Caco-2 (cell line): ENCODE measurements at regions of chr14 and their contacts with region 1.

Region 1: DNA sequence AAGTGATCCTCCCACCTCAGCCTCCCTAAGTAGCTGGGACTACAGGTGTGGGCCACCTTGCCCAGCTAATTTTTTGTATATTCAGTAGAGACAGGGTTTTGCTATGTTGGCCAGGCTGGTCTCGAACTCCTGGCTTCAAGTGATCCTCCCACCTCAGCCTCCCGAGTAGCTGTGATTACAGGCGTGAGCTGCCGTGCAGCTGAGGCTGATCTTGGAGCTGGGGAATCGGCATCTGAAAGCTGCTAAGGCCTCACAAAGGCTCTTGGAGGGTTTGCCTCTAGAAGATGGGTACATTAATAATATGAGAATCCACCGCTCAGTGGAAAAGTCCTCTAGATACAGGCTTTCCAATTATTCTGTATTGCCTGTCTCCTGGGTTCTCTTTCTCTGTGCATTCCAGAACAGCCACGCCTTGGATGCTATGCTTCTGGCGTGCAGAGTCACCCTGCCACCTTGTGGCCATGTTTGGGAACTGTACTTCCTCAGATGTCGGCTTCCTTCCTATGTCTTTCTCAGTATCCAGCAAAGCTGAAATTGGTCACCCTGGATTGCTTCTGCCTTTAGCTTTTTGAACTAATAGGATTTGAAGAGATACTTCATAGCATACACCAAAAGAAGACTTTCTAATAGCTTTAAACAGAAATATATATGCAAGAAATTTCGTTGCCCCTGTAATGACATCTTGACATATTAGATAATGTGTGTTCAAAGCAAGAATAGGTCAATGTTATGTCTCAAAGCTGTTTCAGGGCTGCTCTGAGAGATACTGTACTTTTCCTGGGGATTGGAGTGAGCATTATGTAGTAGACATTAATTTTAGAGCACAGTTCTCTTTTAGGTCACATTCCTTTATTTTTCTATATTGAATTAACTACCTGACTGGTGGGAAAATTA is 75.4 kb downstream of the SNAPC1 start:
- DNase-seq: peak; percentile 68 to 83
- H3K4me3 ChIP-seq: no peak overlapping the region
- H3K4me3 Mint-ChIP-seq: no peak overlapping the region
- H3K27ac Mint-ChIP-seq: no peak overlapping the region
- H3K4me1 ChIP-seq: no peaks in the 10 kb centered on the region
- H3K4me1 Mint-ChIP-seq: no peaks in the 10 kb centered on the region
- H3K27me3 ChIP-seq: no peaks in the 10 kb centered on the region
- H3K27me3 Mint-ChIP-seq: peaks cover 5% of the 10 kb centered on the region
- CTCF ChIP-seq: peak; percentile 83 to 90

Region 2: GRCh38 chr14:61269321-61270083 is 568.1 kb before region 1 on chr14:
- CTCF ChIA-PET with region 1: no interaction called
- POLR2A ChIA-PET with region 1: no interaction called
- intact Hi-C with region 1: loop called (anchors 1 kb)
- DNase-seq: peak; percentile 79 to 80
- H3K4me3 ChIP-seq: peak overlapping the region; percentile 40
- H3K4me3 Mint-ChIP-seq: peak overlapping the region; percentile 53
- H3K27ac Mint-ChIP-seq: no peak overlapping the region
- H3K4me1 ChIP-seq: no peaks in the 10 kb centered on the region
- H3K4me1 Mint-ChIP-seq: no peaks in the 10 kb centered on the region
- H3K27me3 ChIP-seq: no peaks in the 10 kb centered on the region
- H3K27me3 Mint-ChIP-seq: peaks cover 10% of the 10 kb centered on the region
- CTCF ChIP-seq: peak; percentile 75 to 79

Region 3: DNA sequence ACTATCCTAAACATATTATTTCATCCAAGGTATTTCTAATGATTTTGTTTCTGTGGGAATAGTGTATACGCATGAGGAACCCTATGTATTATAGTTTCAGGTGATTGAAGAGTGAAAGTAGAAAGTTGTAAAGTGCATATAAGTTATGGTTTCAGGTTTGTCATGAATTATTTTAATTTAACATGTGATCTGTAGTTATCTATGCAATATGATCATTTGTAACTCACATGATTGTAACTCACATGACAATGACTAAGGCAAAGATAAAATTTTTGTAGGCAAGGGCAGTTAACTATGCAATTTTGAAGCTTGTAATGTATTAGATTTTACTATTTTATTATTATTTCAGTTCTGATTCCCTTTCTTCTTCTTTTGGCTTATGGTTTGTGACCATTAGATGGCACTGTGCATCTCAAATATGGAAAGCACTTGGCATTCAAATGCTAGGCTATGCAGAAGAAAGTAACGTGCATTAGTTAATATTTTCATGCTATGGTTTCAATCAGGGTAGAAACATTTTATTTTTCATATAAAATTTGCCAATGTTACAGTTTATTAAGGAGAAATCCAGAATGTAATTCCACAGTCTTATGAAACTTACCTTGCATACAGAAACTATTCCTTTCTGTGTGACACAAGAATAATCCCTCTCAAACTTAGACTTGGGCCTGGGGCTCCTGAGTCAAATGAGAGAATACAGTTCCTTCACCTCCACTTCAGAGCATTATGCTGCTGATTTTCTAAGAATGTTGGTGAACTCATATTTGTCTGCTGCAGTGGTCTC is 540.7 kb before region 1 on chr14:
- CTCF ChIA-PET with region 1: interaction called, 3 read pairs
- POLR2A ChIA-PET with region 1: no interaction called
- intact Hi-C with region 1: loop called (anchors 1 kb)
- DNase-seq: peak in 1 of 2 experiments; percentile 43
- H3K4me3 ChIP-seq: no peak overlapping the region
- H3K4me3 Mint-ChIP-seq: no peak overlapping the region
- H3K27ac Mint-ChIP-seq: no peak overlapping the region
- H3K4me1 ChIP-seq: no peaks in the 10 kb centered on the region
- H3K4me1 Mint-ChIP-seq: no peaks in the 10 kb centered on the region
- H3K27me3 ChIP-seq: no peaks in the 10 kb centered on the region
- H3K27me3 Mint-ChIP-seq: no peaks in the 10 kb centered on the region
- CTCF ChIP-seq: peak; percentile 39 to 66

Region 4: DNA sequence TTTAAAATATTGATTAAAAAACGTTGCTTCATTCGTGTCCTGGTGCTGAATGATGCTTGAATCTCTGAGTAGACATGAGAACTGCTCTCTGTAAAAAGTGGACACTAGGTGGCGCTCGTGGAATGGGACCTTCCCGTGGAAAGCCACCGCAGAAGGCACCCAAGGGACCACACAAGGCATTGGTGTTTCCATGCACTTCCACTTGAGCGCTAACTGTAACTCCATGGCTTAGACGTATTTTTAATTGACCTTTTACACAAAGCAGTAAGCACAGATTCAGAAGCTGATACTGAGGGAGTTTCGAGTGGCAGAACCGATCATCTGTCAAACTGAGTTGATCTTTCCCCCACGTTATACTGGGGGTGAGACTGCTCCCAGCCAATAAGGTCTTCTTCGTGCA is 380.9 kb before region 1 on chr14:
- CTCF ChIA-PET with region 1: no interaction called
- POLR2A ChIA-PET with region 1: no interaction called
- intact Hi-C with region 1: loop called (anchors 1 kb)
- DNase-seq: peak; percentile 74 to 78
- H3K4me3 ChIP-seq: no peak overlapping the region
- H3K4me3 Mint-ChIP-seq: no peak overlapping the region
- H3K27ac Mint-ChIP-seq: no peak overlapping the region
- H3K4me1 ChIP-seq: no peaks in the 10 kb centered on the region
- H3K4me1 Mint-ChIP-seq: no peaks in the 10 kb centered on the region
- H3K27me3 ChIP-seq: no peaks in the 10 kb centered on the region
- H3K27me3 Mint-ChIP-seq: no peaks in the 10 kb centered on the region
- CTCF ChIP-seq: peak; percentile 84 to 87

Region 5: GRCh38 chr14:61461808-61462275 is 375.7 kb before region 1 on chr14:
- CTCF ChIA-PET with region 1: no interaction called
- POLR2A ChIA-PET with region 1: no interaction called
- intact Hi-C with region 1: loop called (anchors 1 kb)
- DNase-seq: peak in 1 of 2 experiments; percentile 63
- H3K4me3 ChIP-seq: no peak overlapping the region
- H3K4me3 Mint-ChIP-seq: no peak overlapping the region
- H3K27ac Mint-ChIP-seq: no peak overlapping the region
- H3K4me1 ChIP-seq: no peaks in the 10 kb centered on the region
- H3K4me1 Mint-ChIP-seq: no peaks in the 10 kb centered on the region
- H3K27me3 ChIP-seq: no peaks in the 10 kb centered on the region
- H3K27me3 Mint-ChIP-seq: no peaks in the 10 kb centered on the region
- CTCF ChIP-seq: peak; percentile 50 to 68

Region 6: DNA sequence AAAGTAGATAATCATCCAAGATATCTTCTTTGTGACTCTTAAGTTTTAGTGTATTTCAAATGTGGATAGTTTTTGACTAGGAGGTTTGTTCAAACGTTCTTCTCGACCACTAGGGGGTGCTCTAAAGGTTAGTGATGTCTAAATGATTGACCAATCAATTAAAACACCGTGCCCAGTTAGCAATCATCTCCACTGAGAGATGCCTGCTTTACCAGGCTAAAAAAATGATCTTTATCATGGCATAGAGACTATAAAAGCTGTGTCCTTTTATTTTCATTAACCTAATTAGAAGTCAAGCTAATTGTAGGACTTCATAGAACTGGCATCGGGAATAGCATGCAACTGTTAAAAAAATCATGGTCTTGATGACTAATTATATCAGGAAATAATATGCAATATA is 362.3 kb before region 1 on chr14:
- CTCF ChIA-PET with region 1: no interaction called
- POLR2A ChIA-PET with region 1: no interaction called
- intact Hi-C with region 1: loop called (anchors 5 kb)
- DNase-seq: peak in 1 of 2 experiments; percentile 60
- H3K4me3 ChIP-seq: no peak overlapping the region
- H3K4me3 Mint-ChIP-seq: no peak overlapping the region
- H3K27ac Mint-ChIP-seq: no peak overlapping the region
- H3K4me1 ChIP-seq: no peaks in the 10 kb centered on the region
- H3K4me1 Mint-ChIP-seq: peaks cover 6% of the 10 kb centered on the region
- H3K27me3 ChIP-seq: no peaks in the 10 kb centered on the region
- H3K27me3 Mint-ChIP-seq: no peaks in the 10 kb centered on the region
- CTCF ChIP-seq: peak; percentile 61 to 77

Region 7: DNA sequence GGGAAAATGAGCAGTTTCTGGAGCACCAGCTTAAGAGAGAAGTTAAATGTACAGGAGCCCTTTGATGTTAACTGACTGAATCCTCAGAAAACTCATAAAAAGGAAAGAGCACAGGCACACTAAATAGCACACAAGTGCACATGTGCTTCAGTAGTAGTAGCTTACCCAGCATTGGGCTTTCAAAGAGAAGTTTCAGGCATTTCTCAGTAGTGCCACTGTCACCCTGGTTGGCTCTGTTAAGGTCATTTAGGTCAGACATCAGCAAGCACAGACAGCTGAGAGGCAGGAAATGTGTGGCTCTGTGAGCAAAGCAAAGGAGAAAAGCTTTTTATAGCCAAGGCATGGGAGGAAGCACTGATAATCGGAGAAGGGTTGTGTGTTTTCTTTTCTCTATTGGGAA is 238.6 kb before region 1 on chr14:
- CTCF ChIA-PET with region 1: no interaction called
- POLR2A ChIA-PET with region 1: no interaction called
- intact Hi-C with region 1: no loop called
- DNase-seq: no peak
- H3K4me3 ChIP-seq: no peak overlapping the region
- H3K4me3 Mint-ChIP-seq: no peak overlapping the region
- H3K27ac Mint-ChIP-seq: no peak overlapping the region
- H3K4me1 ChIP-seq: peaks cover 40% of the 10 kb centered on the region
- H3K4me1 Mint-ChIP-seq: peaks cover 31% of the 10 kb centered on the region
- H3K27me3 ChIP-seq: no peaks in the 10 kb centered on the region
- H3K27me3 Mint-ChIP-seq: no peaks in the 10 kb centered on the region
- CTCF ChIP-seq: no peak

Region 8: GRCh38 chr14:61710853-61711817 is 126.4 kb before region 1 on chr14:
- CTCF ChIA-PET with region 1: no interaction called
- POLR2A ChIA-PET with region 1: no interaction called
- intact Hi-C with region 1: no loop called
- DNase-seq: no peak
- H3K4me3 ChIP-seq: no peak overlapping the region
- H3K4me3 Mint-ChIP-seq: no peak overlapping the region
- H3K27ac Mint-ChIP-seq: no peak overlapping the region
- H3K4me1 ChIP-seq: peaks cover 25% of the 10 kb centered on the region
- H3K4me1 Mint-ChIP-seq: peaks cover 30% of the 10 kb centered on the region
- H3K27me3 ChIP-seq: no peaks in the 10 kb centered on the region
- H3K27me3 Mint-ChIP-seq: no peaks in the 10 kb centered on the region
- CTCF ChIP-seq: no peak

Region 9: GRCh38 chr14:61761959-61762786 is 75.4 kb before region 1 on chr14 and contains the start of gene SNAPC1:
- CTCF ChIA-PET with region 1: interaction called, 6 read pairs
- POLR2A ChIA-PET with region 1: no interaction called
- intact Hi-C with region 1: loop called (anchors 5 kb)
- DNase-seq: peak; percentile 95
- H3K4me3 ChIP-seq: peak within 1 kb of the TSS; percentile 81
- H3K4me3 Mint-ChIP-seq: peak within 1 kb of the TSS; percentile 99
- H3K27ac Mint-ChIP-seq: peak within 1 kb of the TSS; percentile 97
- H3K4me1 ChIP-seq: 0 out of 2 replicates have a peak, but pooled peaks cover 5% of the 10 kb centered on the region
- H3K4me1 Mint-ChIP-seq: peaks cover 7% of the 10 kb centered on the region
- H3K27me3 ChIP-seq: no peaks in the 10 kb centered on the region
- H3K27me3 Mint-ChIP-seq: no peaks in the 10 kb centered on the region
- CTCF ChIP-seq: no peak
- total RNA-seq, gene SNAPC1: 5.1 and 6.0 TPM in 2 replicates

Region 10: DNA sequence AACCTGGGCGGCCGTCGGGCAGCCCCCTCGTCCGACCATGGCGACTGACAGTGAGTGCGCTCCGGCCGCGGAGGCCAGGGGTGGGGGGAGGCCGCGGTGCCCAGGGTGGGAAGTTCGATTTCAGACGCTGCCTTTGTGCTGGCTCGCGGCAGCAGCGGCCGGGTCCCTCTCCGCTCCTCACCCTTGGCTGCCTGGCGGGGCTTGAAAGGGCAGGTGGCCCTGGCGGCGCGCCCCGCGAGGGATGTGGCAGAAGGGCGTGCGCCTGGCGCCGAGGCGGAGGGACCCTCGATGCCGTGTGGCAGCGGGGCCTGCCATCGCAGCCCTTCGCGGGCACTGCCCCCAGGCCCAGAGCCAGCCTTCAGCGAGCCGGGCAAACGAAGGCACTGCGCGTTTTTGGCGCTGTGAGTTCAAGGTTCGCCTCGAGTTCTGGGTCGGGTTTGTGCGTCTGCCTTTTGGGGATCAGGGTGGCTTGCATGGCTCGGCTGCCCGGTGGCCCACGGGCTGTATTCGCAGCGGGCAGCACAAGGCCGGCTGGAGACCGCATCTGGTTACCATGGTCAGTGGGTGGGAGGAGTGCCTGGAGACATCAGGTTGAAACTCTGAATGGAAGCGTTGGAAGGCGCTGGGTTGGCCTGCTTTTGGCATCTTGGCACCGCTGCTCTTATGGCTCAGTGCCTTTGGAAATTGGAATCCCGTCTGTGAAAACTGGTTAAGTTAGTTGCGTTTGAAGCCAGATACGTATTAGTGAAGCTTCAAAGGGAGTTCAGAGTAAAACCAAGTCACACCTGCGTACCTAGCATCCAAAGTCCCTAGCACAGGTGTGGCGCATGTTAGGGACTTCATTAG is 24.6 kb before region 1 on chr14:
- CTCF ChIA-PET with region 1: no interaction called
- POLR2A ChIA-PET with region 1: no interaction called
- intact Hi-C with region 1: no loop called
- DNase-seq: no peak
- H3K4me3 ChIP-seq: no peak overlapping the region
- H3K4me3 Mint-ChIP-seq: no peak overlapping the region
- H3K27ac Mint-ChIP-seq: no peak overlapping the region
- H3K4me1 ChIP-seq: no peaks in the 10 kb centered on the region
- H3K4me1 Mint-ChIP-seq: no peaks in the 10 kb centered on the region
- H3K27me3 ChIP-seq: no peaks in the 10 kb centered on the region; the same call in 1 of the 2 replicates
- H3K27me3 Mint-ChIP-seq: peaks cover 6% of the 10 kb centered on the region
- CTCF ChIP-seq: no peak

Region 11: GRCh38 chr14:61866932-61867920 is 29.6 kb after region 1 on chr14:
- CTCF ChIA-PET with region 1: no interaction called
- POLR2A ChIA-PET with region 1: no interaction called
- intact Hi-C with region 1: no loop called
- DNase-seq: no peak
- H3K4me3 ChIP-seq: no peak overlapping the region
- H3K4me3 Mint-ChIP-seq: no peak overlapping the region
- H3K27ac Mint-ChIP-seq: no peak overlapping the region
- H3K4me1 ChIP-seq: no peaks in the 10 kb centered on the region
- H3K4me1 Mint-ChIP-seq: no peaks in the 10 kb centered on the region
- H3K27me3 ChIP-seq: no peaks in the 10 kb centered on the region
- H3K27me3 Mint-ChIP-seq: peaks cover 3% of the 10 kb centered on the region
- CTCF ChIP-seq: no peak